Head of caudate nucleus (tissue), 42 donors: ENCODE measurements at regions of chr20 and their contacts with region 1.

Region 1: DNA sequence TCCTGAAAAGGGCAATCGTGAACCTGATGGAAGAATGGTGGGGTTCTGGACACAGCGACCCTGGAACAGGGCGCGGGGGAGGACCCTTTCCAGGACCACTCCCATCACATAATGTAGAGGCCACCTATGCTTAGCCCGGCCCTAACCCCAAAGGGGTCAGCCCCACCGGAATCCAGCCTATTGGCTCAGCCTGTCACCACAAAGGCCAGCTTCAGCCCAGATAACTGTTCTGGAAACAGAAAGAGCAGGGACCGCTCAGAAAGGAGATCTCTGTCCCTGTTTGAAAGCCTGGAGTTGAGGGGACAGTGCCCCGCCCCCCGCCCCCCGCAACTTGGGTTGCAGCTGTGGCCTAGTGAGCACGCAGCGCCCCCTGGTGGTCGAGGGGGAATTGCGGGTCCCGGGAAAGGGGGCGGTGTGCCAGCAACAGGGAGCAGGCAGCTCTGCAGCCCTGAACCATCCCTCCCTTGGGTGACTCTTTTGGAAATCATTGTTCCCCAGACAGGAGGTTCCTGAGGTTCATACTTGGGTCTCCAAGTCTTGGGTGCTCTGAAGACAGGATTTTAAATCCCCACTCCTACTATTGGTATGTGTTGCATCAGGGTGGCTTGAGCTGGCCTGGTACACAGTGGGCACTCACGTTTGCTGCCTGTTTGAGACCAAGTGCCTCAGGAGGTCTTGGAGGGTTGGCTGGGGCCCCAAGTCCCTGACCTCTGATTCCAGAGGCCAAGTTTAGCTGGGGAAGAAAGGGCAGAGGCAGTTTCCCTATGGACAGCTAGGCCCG is 1.5 kb downstream of the SIGLEC1 start:
- DNase-seq: peak; percentile 38 to 93 (median 82)

Region 2: GRCh38 chr20:3616250-3616649 is 94.6 kb before region 1 on chr20:
- intact Hi-C with region 1: no loop called
- DNase-seq: no peak

Region 3: DNA sequence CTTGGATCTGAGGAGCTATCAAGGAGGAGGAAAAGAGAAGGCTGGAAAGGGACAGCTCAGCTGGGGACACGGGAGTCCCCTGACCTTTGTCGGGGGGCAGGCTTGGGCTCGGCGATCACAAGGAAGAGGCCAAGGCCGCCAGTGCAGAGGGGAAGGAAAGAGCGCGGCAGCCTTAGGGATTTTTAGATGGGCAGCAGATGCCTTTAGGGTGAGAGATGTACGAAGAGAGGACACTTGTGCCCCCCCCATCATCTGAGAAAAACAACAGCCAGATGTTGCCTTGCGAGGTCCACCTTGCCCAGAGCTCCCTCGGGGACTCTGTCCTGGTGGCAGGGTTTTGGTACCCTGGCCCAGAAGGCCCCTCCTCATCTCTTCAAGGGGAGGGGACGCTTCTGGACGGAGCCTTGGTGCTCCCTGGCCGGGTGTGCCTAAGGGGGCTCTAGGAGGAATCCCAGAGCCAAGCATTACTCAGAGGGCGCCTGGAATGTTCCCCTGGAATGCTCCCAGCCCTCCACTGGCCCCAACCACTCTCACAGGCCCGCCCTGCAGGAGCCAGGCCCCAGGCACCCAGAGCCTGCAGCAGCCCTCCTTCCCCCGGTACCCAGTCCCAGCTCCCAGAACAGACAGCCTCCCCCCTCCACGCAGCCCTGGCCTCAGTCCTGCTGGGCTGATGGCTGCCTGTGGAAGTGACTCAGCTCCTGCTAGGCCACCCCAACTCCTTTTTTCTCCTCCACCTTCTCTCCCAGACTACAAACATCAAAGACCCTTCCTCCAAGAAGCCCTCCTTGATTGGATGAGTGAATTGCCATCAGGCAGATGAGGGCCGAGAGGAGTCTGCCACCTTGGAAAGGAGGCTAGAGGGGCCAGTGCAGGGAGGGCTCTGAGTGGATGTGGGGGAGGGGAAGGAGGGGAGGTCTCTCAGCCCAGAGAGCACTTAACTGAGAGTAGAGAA is 30.9 kb before region 1 on chr20:
- intact Hi-C with region 1: loop called (anchors 5 kb)
- DNase-seq: peak in 2 of 42 donors; percentile 7 to 19

Region 4: GRCh38 chr20:3766943-3767426 is 56.1 kb after region 1 on chr20:
- intact Hi-C with region 1: no loop called
- DNase-seq: peak in 1 of 42 donors; percentile 43